Mammary epithelial cell (primary cell): ENCODE measurements at regions of chr1 and their contacts with region 1.

Region 1: DNA sequence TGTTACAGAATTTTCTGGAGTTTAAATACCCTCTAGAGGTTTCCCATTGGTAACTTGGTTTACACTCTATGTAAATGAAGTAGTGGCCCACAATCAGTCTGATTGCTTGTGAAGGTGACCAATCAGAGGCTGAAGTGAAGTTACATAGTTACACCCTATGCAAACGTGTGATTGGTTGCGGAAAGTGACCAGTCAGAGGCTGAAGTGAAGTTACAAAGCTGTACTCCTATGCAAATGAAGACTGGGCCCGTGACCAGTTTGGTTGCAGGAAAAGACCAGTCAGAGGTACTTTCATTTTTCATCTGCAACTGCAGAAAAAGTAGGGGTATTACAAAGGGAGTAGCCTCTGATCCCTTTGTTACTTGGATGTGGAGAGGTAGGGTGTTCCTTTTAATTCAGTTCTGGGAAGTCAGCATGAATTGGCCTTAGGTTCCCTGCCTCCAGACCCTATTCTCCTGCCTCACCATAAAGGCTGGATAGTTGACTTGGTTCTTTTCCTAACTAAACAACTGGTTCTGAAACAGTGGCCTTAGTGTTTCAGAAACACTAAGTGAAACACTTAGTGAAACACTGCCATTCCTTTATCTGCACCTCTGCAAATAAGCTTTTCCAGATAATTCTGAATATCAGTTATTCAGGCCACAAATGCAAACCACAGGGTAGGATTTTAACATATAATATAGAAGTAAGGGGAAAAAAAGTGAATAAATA is 39.3 kb downstream of the MAGI3 start:
- DNase-seq: no peak
- H3K4me3 ChIP-seq: no peak overlapping the region
- H3K27ac ChIP-seq: no peak overlapping the region
- H3K4me1 ChIP-seq: no peaks in the 10 kb centered on the region
- H3K27me3 ChIP-seq: no peaks in the 10 kb centered on the region
- CTCF ChIP-seq: no peak

Region 2: DNA sequence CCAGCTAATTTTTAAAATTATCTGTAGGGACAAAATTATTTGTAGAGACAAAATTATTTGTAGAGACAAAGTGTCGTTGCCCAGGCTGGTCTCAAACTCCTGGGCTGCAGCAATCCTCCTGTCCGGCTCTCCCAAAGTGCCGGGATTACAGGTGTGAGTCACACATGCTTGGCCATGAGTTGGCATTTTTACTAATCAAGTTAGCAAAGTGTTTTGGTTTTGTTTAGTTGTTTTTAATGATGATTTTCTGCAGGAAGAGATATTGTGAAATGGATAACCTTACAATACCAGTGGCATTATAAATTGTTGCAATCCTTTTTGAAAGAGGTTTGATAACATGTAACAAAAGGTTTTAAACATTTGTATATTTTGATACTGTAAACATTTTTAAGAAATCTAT is 104.6 kb before region 1 on chr1:
- CTCF ChIA-PET with region 1: no interaction called
- dilution Hi-C with region 1: no loop called
- in situ Hi-C with region 1: loop called in 1 of 2 experiments (anchors 25 kb)
- intact Hi-C with region 1: no loop called
- DNase-seq: peak; percentile 73
- H3K4me3 ChIP-seq: no peak overlapping the region
- H3K27ac ChIP-seq: peak overlapping the region; percentile 13
- H3K4me1 ChIP-seq: peaks cover 19% of the 10 kb centered on the region
- H3K27me3 ChIP-seq: no peaks in the 10 kb centered on the region
- CTCF ChIP-seq: no peak